ENCODE measurements at regions of chr12 and their contacts with region 1.

Region 1: GRCh38 chr12:61037792-61038191 is 1222.4 kb upstream of the USP15 start:
- DNase-seq: no peak
- ATAC-seq: no peak

Region 2: GRCh38 chr12:59119676-59120075 is 1918.1 kb before region 1 on chr12:
- intact Hi-C with region 1: loop called (anchors 5 kb)
- DNase-seq: no peak
- ATAC-seq: no peak

Region 3: DNA sequence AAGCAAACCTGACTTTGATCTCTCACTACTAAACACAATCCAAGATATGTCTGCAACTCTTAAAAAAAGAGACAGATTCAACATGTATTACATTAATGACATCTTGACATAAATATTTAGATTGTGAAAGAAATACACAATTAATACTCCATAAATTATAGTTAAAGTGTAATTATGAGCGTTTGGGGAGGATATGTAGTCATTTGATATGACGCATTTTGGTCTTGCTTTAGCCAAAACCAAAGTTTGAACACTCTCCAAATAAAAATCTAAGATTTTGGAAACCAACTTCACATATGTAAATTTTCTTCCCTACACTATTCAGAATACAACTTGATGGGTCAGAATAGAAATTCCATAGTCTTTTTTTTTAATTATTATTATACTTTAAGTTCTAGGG is 184.4 kb before region 1 on chr12:
- intact Hi-C with region 1: no loop called
- DNase-seq: no peak
- ATAC-seq: no peak

Region 4: DNA sequence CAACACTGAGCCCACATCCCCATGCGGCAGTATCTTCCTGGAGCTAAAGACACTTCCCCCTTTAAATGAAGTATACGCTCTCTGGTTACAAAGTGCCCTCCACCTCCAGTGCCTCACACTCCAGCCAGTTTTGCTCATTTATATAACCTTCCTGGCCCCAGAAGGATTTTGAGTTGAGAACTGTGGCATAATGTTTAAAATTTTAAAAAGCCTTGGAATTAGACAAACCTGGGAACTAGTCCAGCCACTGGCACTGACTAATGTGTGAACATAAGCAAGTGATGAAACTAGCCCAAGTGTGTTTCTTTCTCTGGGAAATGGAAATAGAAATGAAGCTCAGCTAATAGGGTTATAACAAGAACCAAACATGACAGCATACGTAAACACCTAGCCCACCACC is 498.7 kb after region 1 on chr12:
- intact Hi-C with region 1: no loop called
- DNase-seq: no peak
- ATAC-seq: no peak

Measured in sciatic nerve (tissue), 2 donors.